ENCODE measurements at regions of chr15 and their contacts with region 1.

Region 1: DNA sequence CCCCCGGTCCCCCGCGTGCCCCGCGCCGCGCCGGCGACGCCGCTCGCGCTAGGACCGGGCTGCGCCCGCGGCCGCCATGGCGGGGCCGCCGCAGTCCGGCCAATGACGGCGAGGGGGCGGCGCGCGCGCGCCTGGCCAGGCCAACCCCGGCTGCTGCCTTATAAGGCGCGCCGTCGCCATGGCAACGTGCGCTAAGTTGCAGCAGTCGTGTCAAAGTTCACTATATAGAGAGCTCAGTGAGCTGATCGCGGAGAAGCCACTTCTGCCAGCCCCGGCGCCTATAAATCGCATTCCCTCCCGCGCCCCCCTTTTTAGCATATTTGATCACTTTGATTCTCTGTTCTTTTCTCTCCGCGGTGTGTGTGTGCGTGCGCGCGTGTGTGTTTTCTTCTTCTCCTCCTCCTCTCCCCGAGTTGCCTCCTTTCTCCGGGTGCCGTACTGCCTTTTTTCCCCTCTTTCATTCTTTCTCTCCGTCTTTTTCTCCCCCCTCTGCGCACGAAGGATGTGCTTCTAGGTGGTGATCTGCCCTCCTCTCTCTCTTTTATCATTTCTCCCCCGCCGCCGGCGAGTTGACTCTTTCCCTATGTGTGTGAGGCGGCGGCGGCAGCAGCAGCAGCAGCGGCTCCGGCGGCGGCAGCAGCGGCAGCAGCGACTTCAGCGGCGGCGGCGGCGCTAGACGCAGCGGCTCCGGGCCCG is at the start of gene NR2F2:
- H3K4me3 ChIP-seq: peak within 1 kb of the TSS; percentile 86
- H3K27ac ChIP-seq: peak within 1 kb of the TSS; percentile 99
- H3K4me1 ChIP-seq: peaks cover 6% of the 10 kb centered on the region; the same call in 1 of the 2 replicates
- CTCF ChIP-seq: peak; percentile 71

Region 2: DNA sequence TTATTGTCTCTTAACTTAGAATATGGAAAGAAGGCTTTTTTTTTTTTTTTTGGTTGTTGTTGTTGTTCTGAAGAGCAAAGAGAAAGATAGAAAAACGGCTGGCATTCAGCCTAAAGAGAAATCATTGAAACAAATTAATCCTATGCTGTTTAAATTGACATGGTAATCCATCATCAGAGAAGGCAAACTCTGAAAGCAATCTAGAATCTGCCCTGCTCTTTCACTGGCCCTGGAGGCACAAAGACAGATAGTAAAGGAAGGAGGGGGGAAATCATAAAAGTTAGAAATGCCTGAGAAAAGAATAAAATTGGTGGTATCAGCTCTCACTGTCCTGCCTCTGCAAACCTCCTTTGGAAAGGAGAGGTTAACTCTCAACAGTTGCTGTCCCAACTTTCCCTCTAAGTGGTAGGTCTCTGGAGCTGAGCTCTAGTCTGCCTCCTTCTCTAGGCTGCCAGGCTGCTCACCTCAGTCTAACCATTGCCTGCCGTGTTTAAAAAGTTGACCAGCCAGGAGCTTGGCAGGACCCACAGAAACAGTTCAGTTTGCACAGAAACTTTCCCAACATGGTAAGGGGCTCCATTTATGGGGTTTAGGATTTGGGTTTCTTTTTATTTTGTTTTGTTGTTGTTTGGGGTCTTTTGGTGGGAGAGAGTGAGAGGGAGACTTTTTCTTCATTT is 13.5 kb before region 1 on chr15:
- CTCF ChIA-PET with region 1: interaction called, 5 read pairs
- POLR2A ChIA-PET with region 1: interaction called, 10 read pairs
- H3K4me3 ChIP-seq: no peak overlapping the region
- H3K27ac ChIP-seq: no peak overlapping the region
- H3K4me1 ChIP-seq: peaks cover 17% of the 10 kb centered on the region
- CTCF ChIP-seq: no peak

Region 3: DNA sequence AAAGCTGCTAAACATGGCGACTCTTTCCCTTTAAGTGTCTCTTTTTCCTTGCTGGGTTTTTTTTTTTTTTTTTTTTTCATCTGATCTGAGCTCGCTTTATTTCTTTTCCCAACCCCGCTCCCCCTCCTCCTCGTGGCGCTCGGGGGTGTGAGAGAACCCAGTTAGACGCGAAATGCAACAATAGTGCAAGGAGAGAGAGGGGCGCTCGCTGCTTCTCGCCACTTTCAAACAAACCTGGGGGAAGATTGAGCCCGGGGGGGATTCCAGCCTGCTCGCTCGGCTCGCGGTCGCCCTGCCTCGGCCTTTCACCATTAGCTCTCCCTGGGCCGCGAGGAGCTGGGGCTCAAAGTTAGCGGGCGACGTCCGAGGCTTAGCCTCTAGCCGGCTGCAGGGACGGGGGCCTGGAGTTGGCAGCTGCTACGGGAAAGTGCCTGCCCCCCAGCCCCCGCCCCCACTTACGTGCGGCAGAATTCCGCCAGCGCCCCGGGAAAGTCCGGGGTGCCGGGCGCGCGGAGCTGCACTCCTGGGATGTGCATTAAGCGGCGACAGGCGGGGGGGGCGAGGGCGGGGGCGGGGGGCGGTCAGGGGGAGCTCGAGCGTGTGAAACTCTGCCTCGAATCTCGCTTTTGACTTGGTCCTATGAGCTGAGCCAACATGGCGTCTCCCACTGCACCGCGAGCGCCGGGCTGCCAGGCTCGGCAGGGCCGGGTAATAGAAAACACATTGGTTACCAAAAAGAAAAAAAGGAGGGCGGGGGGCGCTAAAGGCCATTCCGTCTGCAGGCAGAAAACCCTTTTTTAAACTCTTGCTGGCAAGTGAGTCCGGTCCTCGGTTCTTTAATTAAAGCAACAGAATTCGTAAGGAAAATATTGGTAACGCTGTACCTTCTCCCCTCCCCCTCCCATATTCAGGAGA is 10.3 kb after region 1 on chr15:
- CTCF ChIA-PET with region 1: interaction called, 13 read pairs
- POLR2A ChIA-PET with region 1: interaction called, 42 read pairs
- H3K4me3 ChIP-seq: peak overlapping the region; percentile 66
- H3K27ac ChIP-seq: peak overlapping the region; percentile 96
- H3K4me1 ChIP-seq: peaks cover 30% of the 10 kb centered on the region
- CTCF ChIP-seq: peak; percentile 58

Region 4: GRCh38 chr15:96356494-96357455 is 26.2 kb after region 1 on chr15:
- CTCF ChIA-PET with region 1: interaction called, 29 read pairs
- POLR2A ChIA-PET with region 1: interaction called, 10 read pairs
- H3K4me3 ChIP-seq: peak overlapping the region; percentile 63
- H3K27ac ChIP-seq: peak overlapping the region; percentile 65; the same call in 1 of the 2 replicates
- H3K4me1 ChIP-seq: peaks cover 18% of the 10 kb centered on the region
- CTCF ChIP-seq: peak; percentile 99

Region 5: GRCh38 chr15:96585484-96586386 is 255.1 kb after region 1 on chr15:
- CTCF ChIA-PET with region 1: interaction called, 22 read pairs
- POLR2A ChIA-PET with region 1: no interaction called
- H3K4me3 ChIP-seq: no peak overlapping the region
- H3K27ac ChIP-seq: no peak overlapping the region
- H3K4me1 ChIP-seq: no peaks in the 10 kb centered on the region
- CTCF ChIP-seq: no peak

Region 6: GRCh38 chr15:96818861-96819260 is 488.3 kb after region 1 on chr15:
- CTCF ChIA-PET with region 1: no interaction called
- POLR2A ChIA-PET with region 1: no interaction called
- H3K4me3 ChIP-seq: no peak overlapping the region
- H3K27ac ChIP-seq: no peak overlapping the region
- H3K4me1 ChIP-seq: no peaks in the 10 kb centered on the region
- CTCF ChIP-seq: no peak

Region 7: DNA sequence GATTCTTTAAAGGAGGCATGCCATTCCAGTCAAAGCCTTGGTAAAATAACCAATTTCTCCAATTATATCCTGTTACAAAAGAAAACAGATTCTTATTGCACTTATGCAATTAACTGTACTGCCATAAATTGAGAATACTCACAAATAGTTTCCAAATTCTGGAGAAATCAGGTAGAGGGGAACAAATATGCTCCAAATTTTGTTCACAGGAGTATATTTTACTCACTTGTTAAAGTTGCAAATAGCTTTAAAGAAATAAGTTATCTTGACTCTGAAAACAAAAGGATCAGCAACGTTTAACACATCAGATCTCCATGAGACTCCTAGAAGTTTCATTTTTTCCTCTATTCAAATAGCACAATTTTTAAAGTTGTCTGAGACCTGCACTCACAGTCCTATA is 917.8 kb after region 1 on chr15:
- CTCF ChIA-PET with region 1: interaction called, 11 read pairs
- POLR2A ChIA-PET with region 1: interaction called, 4 read pairs
- H3K4me3 ChIP-seq: no peak overlapping the region
- H3K27ac ChIP-seq: no peak overlapping the region
- H3K4me1 ChIP-seq: no peaks in the 10 kb centered on the region
- CTCF ChIP-seq: no peak

Measured in HEK293 (cell line).